ENCODE measurements at regions of chr18 and their contacts with region 1.

Region 1: GRCh38 chr18:839224-840022 is 27.4 kb upstream of the YES1 start:
- DNase-seq: peak; percentile 74 to 94 (median 84)
- ATAC-seq: peak; percentile 98
- H3K4me3 ChIP-seq: no peak overlapping the region
- H3K27ac ChIP-seq: no peak overlapping the region
- H3K4me1 ChIP-seq: peaks cover 0 to 2% of the 10 kb centered on the region in 2 donors
- H3K27me3 ChIP-seq: peaks cover 0 to 17% of the 10 kb centered on the region in 2 donors
- CTCF ChIP-seq: peak; percentile 96 to 99

Region 2: DNA sequence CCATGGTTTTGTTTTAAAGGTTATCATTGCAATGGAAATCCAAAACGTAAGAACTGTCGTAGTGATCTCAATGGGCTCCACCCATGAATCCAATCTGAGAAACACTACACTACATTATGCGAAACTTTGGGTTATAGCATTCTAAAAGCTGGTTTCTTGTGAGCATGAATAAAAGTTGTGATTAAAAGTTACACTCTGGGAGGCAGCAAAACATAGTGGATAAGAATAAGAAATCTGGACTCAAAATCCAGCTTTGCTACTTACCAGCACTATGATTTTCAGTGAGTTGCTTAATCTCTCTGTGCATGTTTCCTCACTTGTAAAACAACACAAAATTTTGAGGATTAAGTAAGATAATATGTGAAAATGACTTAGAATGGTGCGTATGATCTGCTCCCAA is 545.9 kb before region 1 on chr18:
- intact Hi-C with region 1: loop called in 1 of 2 experiments (anchors 10 kb)
- DNase-seq: peak in 1 of 4 donors; percentile 49
- ATAC-seq: no peak
- H3K4me3 ChIP-seq: no peak overlapping the region
- H3K27ac ChIP-seq: no peak overlapping the region
- H3K4me1 ChIP-seq: no peaks in the 10 kb centered on the region
- H3K27me3 ChIP-seq: no peaks in the 10 kb centered on the region
- CTCF ChIP-seq: no peak

Region 3: DNA sequence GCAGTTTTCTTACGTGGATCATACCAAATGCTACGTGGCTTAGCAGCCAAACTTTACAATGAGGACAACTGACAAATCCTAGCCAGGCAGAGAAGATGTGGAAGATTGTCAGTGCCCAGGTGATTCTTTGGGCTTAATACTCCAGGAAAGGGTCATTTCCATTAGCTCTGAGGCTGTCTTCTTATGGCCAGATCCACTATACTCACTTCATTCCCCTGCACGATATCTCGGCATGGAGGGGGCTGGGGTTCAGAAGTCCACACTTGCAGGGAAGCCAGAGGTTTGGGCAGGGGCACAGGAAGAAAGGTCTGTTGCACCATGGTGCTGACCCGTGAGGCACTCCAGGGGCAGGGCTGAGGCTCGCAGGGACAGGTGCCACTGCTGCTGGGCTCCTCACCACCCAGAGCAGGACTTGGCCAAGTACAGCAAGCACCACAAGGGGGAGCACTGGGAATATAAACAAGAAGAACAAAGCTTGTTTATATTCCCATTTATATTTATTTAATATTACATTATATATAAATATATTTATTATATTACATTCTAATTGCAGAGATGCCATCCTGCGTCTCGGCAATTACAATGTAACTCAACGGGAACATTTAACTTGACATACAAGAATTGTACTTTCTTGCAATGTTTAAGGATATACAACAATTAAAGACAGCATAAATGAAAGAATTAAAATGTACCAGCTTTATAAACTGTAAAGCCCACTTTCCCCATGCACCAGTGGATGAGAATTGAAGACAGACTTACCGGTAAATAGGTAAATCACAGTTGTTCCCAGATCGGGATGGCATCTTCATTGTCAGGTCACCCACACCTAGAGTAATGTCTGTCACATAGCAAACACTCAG is 215.4 kb before region 1 on chr18:
- intact Hi-C with region 1: loop called in 1 of 2 experiments (anchors 5 kb)
- DNase-seq: peak in 2 of 4 donors; percentile 55 to 76
- ATAC-seq: peak; percentile 91
- H3K4me3 ChIP-seq: no peak overlapping the region
- H3K27ac ChIP-seq: no peak overlapping the region
- H3K4me1 ChIP-seq: no peaks in the 10 kb centered on the region
- H3K27me3 ChIP-seq: no peaks in the 10 kb centered on the region
- CTCF ChIP-seq: peak; percentile 73 to 81

Region 4: DNA sequence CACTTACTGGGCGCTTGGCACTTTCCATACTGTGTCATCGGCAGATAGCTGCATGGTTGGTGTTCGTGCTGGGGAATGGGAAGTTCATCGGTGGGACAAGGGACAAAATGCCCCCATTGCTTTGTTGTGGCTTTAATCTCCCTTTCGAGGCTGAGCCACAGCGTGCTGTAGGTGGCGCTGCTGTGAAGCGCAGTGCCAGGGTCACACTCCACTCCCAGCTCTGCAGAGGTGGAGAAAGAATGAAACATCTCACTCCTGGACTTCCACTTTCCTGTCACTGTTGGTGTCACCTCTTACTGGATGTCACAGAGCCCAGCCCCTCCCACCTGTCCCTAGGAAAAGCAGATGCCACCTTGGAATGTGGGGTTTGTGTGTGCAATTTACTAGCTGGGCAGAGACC is 173.2 kb before region 1 on chr18:
- intact Hi-C with region 1: no loop called
- DNase-seq: no peak
- ATAC-seq: peak; percentile 23
- H3K4me3 ChIP-seq: no peak overlapping the region
- H3K27ac ChIP-seq: no peak overlapping the region
- H3K4me1 ChIP-seq: no peaks in the 10 kb centered on the region
- H3K27me3 ChIP-seq: no peaks in the 10 kb centered on the region
- CTCF ChIP-seq: no peak

Region 5: DNA sequence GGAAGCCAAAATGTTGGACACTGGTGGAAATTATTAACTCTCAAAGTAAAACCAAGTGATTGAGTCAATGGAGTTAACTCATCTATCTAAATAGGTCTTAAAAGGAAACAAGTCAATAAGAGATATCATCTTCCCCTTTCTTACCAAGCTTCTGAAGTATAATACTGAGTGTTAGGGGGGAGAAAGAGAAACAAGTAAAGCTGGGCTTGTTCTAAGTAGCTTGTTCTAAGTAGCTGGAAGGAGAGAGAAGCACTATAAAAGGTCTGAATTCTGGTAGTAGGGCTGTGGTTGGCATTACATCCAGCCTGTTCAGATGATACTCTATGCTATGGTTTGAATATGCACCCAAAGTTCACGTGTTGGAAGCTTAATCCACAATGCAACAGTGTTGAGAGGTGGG is 54.2 kb before region 1 on chr18:
- intact Hi-C with region 1: no loop called
- DNase-seq: no peak
- ATAC-seq: no peak
- H3K4me3 ChIP-seq: no peak overlapping the region
- H3K27ac ChIP-seq: no peak overlapping the region
- H3K4me1 ChIP-seq: peaks cover 0 to 4% of the 10 kb centered on the region in 2 donors
- H3K27me3 ChIP-seq: no peaks in the 10 kb centered on the region
- CTCF ChIP-seq: no peak